Dorsolateral prefrontal cortex (tissue), 120 donors: ENCODE measurements at regions of chr3 and their contacts with region 1.

Region 1: DNA sequence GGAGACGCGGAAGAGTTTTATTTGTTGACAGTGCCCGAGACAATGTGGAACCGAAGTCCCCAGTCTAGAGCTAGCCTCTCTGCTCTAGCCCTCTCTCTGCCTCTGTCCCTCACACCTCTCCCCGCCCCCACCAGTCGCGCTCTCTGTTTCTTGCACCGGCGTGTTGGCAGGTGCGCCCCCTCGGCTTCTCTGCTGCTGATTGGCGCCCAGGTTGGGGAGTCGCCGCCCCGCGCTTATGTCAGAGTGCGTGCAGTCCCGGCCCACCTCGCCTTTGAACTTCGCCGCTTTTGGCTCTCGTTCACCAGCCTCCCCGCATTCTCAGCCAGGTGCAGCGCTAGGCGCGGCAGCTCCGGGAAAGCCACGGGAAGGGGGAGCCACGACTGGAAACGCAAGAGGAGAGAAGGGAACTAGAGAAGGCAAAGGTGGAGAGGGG is at the start of gene SOX14:
- DNase-seq: no peak
- H3K4me3 ChIP-seq: peak within 1 kb of the TSS in 20 of 59 donors; percentile 1 to 49 (median 12)
- H3K27ac ChIP-seq: no peak within 1 kb of the TSS
- H3K27me3 ChIP-seq: peaks cover 30 to 99% (median 97%) of the 10 kb centered on the region in 45 donors
- CTCF ChIP-seq: no peak
- total RNA-seq, gene SOX14: not detected

Region 2: DNA sequence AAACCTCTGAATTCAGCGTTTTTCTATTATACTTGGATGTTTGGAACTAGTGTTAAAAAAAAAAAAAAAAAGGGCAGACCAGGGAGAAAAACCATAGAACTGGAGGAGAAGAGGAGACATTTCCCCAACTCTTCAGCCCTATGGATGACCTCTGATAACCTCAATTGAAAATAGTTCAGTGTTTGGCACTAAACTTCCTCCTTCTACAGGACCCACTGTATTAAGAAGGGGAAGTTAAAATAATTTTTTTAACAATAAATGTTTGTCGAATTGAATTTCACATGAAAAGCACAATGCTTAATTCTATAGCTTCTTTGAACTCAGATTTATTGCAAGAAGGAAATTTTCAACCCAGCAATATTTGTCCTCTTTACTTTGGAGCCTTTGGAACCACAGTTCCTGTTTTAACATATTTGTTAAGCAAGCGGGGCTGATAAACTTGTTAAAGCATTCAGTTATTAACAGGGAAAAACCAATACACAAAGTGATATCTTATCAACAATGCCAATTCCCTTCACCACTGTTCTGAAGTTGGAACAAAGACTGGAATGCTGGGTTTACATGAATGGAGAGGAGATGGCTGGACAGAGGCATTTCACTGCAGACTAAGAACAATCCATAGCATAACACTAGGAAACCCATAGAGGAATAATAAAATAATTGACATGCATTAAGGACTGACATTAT is 371.3 kb after region 1 on chr3:
- intact Hi-C with region 1: no loop called
- DNase-seq: no peak
- H3K4me3 ChIP-seq: peak overlapping the region in 1 of 59 donors; percentile 10
- H3K27ac ChIP-seq: peak overlapping the region in 3 of 59 donors; percentile 13 to 50 (median 15)
- H3K27me3 ChIP-seq: no peaks in the 10 kb centered on the region
- CTCF ChIP-seq: no peak

Region 3: DNA sequence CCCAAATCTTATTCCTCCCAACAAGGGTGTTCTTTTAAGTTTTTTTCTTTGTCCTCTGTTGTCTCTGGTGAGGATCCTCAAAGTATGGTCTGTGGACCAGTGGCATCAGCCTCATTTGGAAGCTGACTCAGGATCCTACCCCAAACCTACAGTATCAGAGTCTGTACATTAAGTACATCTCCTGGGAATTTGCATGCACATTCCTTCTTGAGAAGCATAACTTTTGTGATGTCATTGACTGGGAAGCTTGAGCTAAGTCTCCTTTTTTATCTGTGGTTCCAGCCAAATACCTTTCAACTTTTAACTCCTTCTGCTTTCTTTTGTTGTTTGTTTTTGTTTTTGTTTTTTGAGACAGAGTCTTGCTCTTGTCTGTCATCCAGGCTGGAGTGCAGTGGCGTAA is 463.6 kb after region 1 on chr3:
- intact Hi-C with region 1: loop called in 1 of 2 experiments (anchors 10 kb)
- DNase-seq: no peak
- H3K4me3 ChIP-seq: no peak overlapping the region
- H3K27ac ChIP-seq: no peak overlapping the region
- H3K27me3 ChIP-seq: no peaks in the 10 kb centered on the region
- CTCF ChIP-seq: no peak